A549 (cell line): ENCODE measurements at regions of chr2 and their contacts with region 1.

Region 1: DNA sequence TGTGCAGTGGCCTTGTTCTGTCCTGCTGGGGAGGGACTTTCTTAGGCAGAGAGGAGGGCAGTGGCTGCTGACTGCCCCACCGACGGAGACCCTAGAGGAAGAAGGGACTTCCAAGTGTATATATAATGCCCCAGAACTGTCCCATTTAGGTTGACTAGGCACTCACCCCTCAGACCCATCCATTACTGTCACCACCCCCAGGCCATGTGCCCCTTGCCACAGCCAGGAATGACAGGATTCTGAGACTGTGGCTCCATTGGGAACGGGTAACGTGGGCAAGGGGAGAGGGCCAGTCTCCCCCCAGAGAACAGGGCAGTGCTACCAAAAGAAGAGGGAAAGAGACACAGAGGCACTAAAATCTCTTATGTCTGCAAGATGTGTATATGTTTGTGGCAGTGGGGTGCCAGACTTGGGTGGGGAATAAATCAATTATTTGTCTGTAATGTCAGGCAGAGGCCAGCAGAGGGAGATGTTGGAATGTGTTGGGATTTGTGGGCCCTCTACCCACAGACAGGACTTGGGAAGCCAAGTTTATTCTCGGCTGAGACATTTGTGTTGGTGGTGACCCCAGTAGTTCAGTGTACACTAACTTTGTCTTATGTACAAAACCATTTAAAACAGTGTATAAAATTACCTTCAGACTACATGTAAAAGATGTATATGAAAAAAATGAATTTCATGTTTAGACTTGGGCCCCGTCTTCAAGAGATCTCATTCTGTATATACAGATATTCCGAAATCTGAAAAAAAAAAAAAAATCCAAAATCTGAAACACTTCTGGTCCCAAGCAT is 24.0 kb upstream of the TMEM37 start:
- DNase-seq: peak; percentile 54 to 70
- ATAC-seq: peak; percentile 83 to 92
- H3K4me3 ChIP-seq: no peak overlapping the region
- H3K27ac ChIP-seq: no peak overlapping the region
- H3K4me1 ChIP-seq: no peaks in the 10 kb centered on the region
- CTCF ChIP-seq: peak; percentile 91
- EP300 ChIP-seq: no peak
- POLR2A ChIP-seq: no peak
- RAD21 ChIP-seq: peak; percentile 95

Region 2: GRCh38 chr2:119419803-119420508 is 12.3 kb after region 1 on chr2:
- CTCF ChIA-PET with region 1: interaction called, 10 read pairs
- POLR2A ChIA-PET with region 1: no interaction called
- DNase-seq: no peak
- ATAC-seq: no peak
- H3K4me3 ChIP-seq: no peak overlapping the region
- H3K27ac ChIP-seq: peak overlapping the region in 1 of 2 experiments; percentile 56; a peak in 1 of 6 replicates
- H3K4me1 ChIP-seq: peaks cover 20% of the 10 kb centered on the region; the same call in 2 of the 3 replicates
- CTCF ChIP-seq: no peak
- EP300 ChIP-seq: no peak
- POLR2A ChIP-seq: no peak
- RAD21 ChIP-seq: no peak

Region 3: GRCh38 chr2:119487434-119488244 is 80.0 kb after region 1 on chr2:
- CTCF ChIA-PET with region 1: interaction called, 18 read pairs
- POLR2A ChIA-PET with region 1: no interaction called
- DNase-seq: peak; percentile 21 to 35
- ATAC-seq: peak in 1 of 2 experiments; percentile 45; a peak in 3 of 6 replicates
- H3K4me3 ChIP-seq: no peak overlapping the region
- H3K27ac ChIP-seq: peak overlapping the region; percentile 67 to 78
- H3K4me1 ChIP-seq: peaks cover 86% of the 10 kb centered on the region
- CTCF ChIP-seq: no peak
- EP300 ChIP-seq: no peak
- POLR2A ChIP-seq: no peak
- RAD21 ChIP-seq: no peak